MCF 10A (cell line): ENCODE measurements at regions of chr4 and their contacts with region 1.

Region 1: DNA sequence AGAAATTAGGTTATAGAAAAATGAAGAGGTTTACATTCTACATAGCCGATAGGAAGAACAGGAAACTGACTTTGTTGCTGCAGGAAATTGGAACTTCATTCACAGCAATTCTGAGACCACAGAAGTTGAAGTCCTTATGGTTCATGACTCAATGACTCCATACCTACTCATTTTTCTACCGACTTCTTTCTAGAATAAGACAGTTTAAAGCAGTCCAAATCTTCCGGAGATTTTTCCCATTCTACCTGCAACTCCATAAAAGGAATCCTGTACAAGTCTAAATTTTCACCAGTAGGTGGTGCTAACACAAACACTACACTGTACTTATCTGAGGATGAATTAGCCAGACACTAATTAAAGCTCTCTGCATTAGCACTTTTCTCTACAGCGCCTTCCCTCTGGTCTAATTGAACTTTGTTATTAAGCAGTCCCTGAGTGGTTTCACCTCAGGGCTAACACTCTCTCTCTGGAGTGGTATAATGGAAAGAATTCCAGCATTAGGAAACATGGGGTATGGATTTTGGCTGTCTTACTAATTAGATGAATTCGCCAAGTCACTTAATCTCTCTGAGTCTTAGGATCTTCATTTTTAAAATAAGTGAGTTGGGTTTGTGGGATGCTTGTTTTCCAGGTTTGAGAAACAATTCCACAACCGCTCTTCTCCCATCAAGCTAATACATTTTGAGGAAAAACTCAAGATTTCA is 167.9 kb downstream of the SMIM20 start:
- DNase-seq: peak; percentile 69
- H3K4me3 Mint-ChIP-seq: no peak overlapping the region
- H3K27ac Mint-ChIP-seq: no peak overlapping the region
- H3K4me1 Mint-ChIP-seq: peaks cover 25% of the 10 kb centered on the region
- H3K27me3 Mint-ChIP-seq: no peaks in the 10 kb centered on the region
- CTCF ChIP-seq: peak; percentile 57

Region 2: GRCh38 chr4:24949970-24950369 is 1132.0 kb before region 1 on chr4:
- CTCF ChIA-PET with region 1: no interaction called
- POLR2A ChIA-PET with region 1: no interaction called
- intact Hi-C with region 1: no loop called
- DNase-seq: no peak
- H3K4me3 Mint-ChIP-seq: no peak overlapping the region
- H3K27ac Mint-ChIP-seq: no peak overlapping the region
- H3K4me1 Mint-ChIP-seq: no peaks in the 10 kb centered on the region
- H3K27me3 Mint-ChIP-seq: peaks cover 27% of the 10 kb centered on the region
- CTCF ChIP-seq: no peak

Region 3: GRCh38 chr4:26061248-26061986 is 20.5 kb before region 1 on chr4:
- CTCF ChIA-PET with region 1: interaction called, 31 read pairs
- POLR2A ChIA-PET with region 1: interaction called, 16 read pairs
- intact Hi-C with region 1: no loop called
- DNase-seq: peak; percentile 78
- H3K4me3 Mint-ChIP-seq: no peak overlapping the region
- H3K27ac Mint-ChIP-seq: no peak overlapping the region
- H3K4me1 Mint-ChIP-seq: peaks cover 7% of the 10 kb centered on the region
- H3K27me3 Mint-ChIP-seq: no peaks in the 10 kb centered on the region
- CTCF ChIP-seq: peak; percentile 61

Region 4: GRCh38 chr4:26116092-26116491 is 34.1 kb after region 1 on chr4:
- CTCF ChIA-PET with region 1: interaction called, 15 read pairs
- POLR2A ChIA-PET with region 1: interaction called, 7 read pairs
- intact Hi-C with region 1: no loop called
- DNase-seq: no peak
- H3K4me3 Mint-ChIP-seq: no peak overlapping the region
- H3K27ac Mint-ChIP-seq: no peak overlapping the region
- H3K4me1 Mint-ChIP-seq: peaks cover 14% of the 10 kb centered on the region
- H3K27me3 Mint-ChIP-seq: no peaks in the 10 kb centered on the region
- CTCF ChIP-seq: no peak

Region 5: GRCh38 chr4:26235500-26235899 is 153.6 kb after region 1 on chr4:
- CTCF ChIA-PET with region 1: interaction called, 25 read pairs
- POLR2A ChIA-PET with region 1: interaction called, 7 read pairs
- intact Hi-C with region 1: loop called (anchors 1 kb)
- DNase-seq: peak; percentile 92
- H3K4me3 Mint-ChIP-seq: no peak overlapping the region
- H3K27ac Mint-ChIP-seq: peak overlapping the region; percentile 61
- H3K4me1 Mint-ChIP-seq: peaks cover 15% of the 10 kb centered on the region
- H3K27me3 Mint-ChIP-seq: no peaks in the 10 kb centered on the region
- CTCF ChIP-seq: no peak

Region 6: DNA sequence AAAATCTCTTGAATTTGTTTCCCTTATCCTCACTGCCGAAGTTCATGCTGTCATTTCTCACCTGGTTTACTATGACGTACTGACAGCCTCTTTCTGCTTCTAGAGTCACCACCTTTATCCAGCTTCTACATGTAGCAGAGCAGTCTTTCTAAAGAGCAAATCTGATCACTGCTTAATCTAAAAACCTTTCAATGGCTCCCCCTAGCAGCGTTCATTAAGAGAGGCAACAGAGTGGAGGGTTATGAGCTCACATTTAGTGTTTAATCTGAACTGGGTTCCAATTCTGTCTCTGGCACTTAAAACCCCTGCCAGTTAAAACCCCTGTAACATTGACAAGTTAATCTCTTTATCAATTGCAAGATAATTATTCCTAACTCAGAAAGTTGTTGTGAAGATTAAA is 243.2 kb after region 1 on chr4:
- CTCF ChIA-PET with region 1: interaction called, 40 read pairs
- POLR2A ChIA-PET with region 1: interaction called, 24 read pairs
- intact Hi-C with region 1: loop called (anchors 1 kb)
- DNase-seq: peak; percentile 64
- H3K4me3 Mint-ChIP-seq: no peak overlapping the region
- H3K27ac Mint-ChIP-seq: no peak overlapping the region
- H3K4me1 Mint-ChIP-seq: peaks cover 29% of the 10 kb centered on the region
- H3K27me3 Mint-ChIP-seq: no peaks in the 10 kb centered on the region
- CTCF ChIP-seq: peak; percentile 31